ENCODE measurements at regions of chr3 and their contacts with region 1.

Region 1: GRCh38 chr3:4674216-4674615 is 181.1 kb downstream of the ITPR1 start:
- H3K4me3 ChIP-seq: no peak overlapping the region
- H3K27ac ChIP-seq: no peak overlapping the region
- H3K4me1 ChIP-seq: no peaks in the 10 kb centered on the region
- CTCF ChIP-seq: no peak

Region 2: GRCh38 chr3:4656059-4656458 is 18.2 kb before region 1 on chr3:
- CTCF ChIA-PET with region 1: interaction called, 12 read pairs
- POLR2A ChIA-PET with region 1: no interaction called
- H3K4me3 ChIP-seq: no peak overlapping the region
- H3K27ac ChIP-seq: no peak overlapping the region
- H3K4me1 ChIP-seq: no peaks in the 10 kb centered on the region
- CTCF ChIP-seq: peak; percentile 88

Measured in HEK293 (cell line).